Naive thymus-derived CD4-positive, alpha-beta T cell (primary cell): ENCODE measurements at regions of chr4 and their contacts with region 1.

Region 1: GRCh38 chr4:1289207-1290164 is at the start of gene MAEA:
- DNase-seq: peak; percentile 91 to 97 (median 96)
- ATAC-seq: peak; percentile 98
- H3K4me3 ChIP-seq: peak within 1 kb of the TSS; percentile 96
- H3K4me3 Mint-ChIP-seq: peak within 1 kb of the TSS; percentile 91 to 99 (median 93)
- H3K27ac ChIP-seq: peak within 1 kb of the TSS; percentile 93
- H3K27ac Mint-ChIP-seq: peak within 1 kb of the TSS; percentile 88 to 94 (median 90)
- H3K4me1 ChIP-seq: peaks cover 22 to 34% of the 10 kb centered on the region in 2 donors
- H3K4me1 Mint-ChIP-seq: peaks cover 23 to 49% (median 37%) of the 10 kb centered on the region in 7 donors
- H3K27me3 ChIP-seq: no peaks in the 10 kb centered on the region
- H3K27me3 Mint-ChIP-seq: no peaks in the 10 kb centered on the region
- total RNA-seq, gene MAEA: 56.2 to 92.2 (median 79.4) TPM

Region 2: DNA sequence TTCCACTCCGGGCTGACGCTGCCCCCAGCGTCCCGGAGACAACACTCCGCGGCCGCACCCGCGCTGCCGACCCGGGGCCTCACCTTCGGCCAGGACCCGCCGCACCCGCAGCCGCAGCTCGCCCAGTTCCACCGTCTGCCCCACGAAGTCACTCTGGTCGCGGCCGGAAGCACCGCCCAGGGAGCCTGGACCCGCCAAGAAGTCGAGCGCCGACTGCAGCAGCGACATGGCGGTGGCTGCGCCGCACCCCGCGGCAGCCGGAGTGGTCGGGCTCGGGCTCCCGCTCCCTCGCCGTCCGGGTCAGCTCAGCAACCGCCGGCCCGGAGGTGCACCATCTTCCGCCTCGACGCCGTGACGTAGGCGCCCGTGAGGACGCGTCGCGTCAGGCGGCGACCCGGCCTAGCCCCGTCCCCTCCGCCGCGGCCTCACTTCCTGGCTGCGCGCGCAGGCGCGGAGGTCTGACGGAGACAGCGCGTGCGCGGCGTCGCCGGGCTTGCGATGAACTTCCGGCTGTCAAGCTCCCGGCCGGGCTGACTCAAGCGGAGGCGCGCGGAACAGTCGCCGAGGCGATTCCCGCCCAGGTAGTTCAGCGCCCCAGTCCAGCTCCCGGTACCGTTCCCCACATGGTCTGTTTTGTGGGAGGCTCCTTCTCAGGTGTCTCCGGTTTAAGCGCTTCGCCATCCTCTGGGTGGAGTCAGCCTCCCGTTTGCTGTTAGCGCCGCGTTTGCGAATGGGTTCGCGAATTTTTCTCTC is 357.4 kb before region 1 on chr4 and contains the starts of genes GAK and TMEM175:
- CTCF ChIA-PET with region 1: no interaction called
- POLR2A ChIA-PET with region 1: interaction called, 4 read pairs
- intact Hi-C with region 1: loop called (anchors 1 to 5 kb)
- DNase-seq: peak; percentile 93 to 99 (median 98)
- ATAC-seq: peak; percentile 95
- H3K4me3 ChIP-seq: peak within 1 kb of the TSS; percentile 83
- H3K4me3 Mint-ChIP-seq: peak within 1 kb of the TSS; percentile 89 to 99 (median 95)
- H3K27ac ChIP-seq: peak within 1 kb of the TSS; percentile 99
- H3K27ac Mint-ChIP-seq: peak within 1 kb of the TSS; percentile 92 to 97 (median 96)
- H3K4me1 ChIP-seq: peaks cover 24 to 35% of the 10 kb centered on the region in 2 donors
- H3K4me1 Mint-ChIP-seq: peaks cover 35 to 59% (median 48%) of the 10 kb centered on the region in 7 donors
- H3K27me3 ChIP-seq: no peaks in the 10 kb centered on the region
- H3K27me3 Mint-ChIP-seq: no peaks in the 10 kb centered on the region
- total RNA-seq, gene GAK: 167 to 206 (median 174) TPM
- total RNA-seq, gene TMEM175: 28.9 to 69.9 (median 64.9) TPM

Region 3: DNA sequence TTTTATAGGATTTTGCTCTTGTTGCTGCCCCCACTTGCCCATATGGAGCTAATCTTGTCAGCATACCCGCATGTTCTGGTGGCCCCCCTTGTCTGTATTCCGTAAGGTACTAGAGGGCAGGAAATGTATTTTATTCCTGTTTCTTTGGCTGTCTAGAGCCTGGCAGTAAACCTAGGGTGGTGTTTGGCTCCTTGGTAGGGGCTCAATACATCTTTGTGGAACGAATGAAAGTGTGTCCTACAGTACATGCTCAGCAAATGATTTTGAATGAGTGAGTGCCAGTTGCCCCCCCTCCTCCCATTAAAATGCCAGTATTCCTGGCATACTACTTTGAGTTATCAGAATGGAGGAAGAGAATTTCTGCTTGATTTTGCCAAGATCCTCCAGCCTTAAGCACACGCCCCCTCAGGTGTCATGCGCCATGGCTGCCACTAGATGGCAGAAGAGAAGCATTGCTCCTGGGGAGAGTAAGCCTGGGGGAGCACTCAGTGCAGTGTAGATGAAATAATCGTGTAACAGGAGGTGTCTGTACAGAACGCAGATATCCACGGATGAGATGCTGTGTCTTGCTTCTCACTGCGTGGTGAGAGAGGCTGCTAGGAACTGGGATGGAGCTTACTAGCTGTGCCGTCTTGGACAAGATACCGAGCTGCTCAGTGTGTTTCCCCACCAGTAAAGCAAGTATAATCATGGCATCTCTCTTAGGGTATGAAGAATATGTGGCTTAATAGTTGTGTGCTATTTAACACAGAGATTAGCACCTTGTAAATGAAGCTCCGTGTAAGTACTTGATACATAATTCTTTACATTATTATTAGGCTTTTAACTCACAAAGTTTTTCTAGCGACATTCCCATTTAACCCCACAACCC is 158.9 kb before region 1 on chr4:
- CTCF ChIA-PET with region 1: no interaction called
- POLR2A ChIA-PET with region 1: no interaction called
- intact Hi-C with region 1: loop called in 1 of 2 experiments (anchors 1 kb)
- DNase-seq: peak; percentile 55 to 86 (median 75)
- ATAC-seq: peak; percentile 100
- H3K4me3 ChIP-seq: no peak overlapping the region
- H3K4me3 Mint-ChIP-seq: peak overlapping the region in 1 of 10 donors; percentile 46
- H3K27ac ChIP-seq: no peak overlapping the region
- H3K27ac Mint-ChIP-seq: no peak overlapping the region
- H3K4me1 ChIP-seq: no peaks in the 10 kb centered on the region
- H3K4me1 Mint-ChIP-seq: peaks cover 0 to 9% (median 4%) of the 10 kb centered on the region in 7 donors
- H3K27me3 ChIP-seq: no peaks in the 10 kb centered on the region
- H3K27me3 Mint-ChIP-seq: peaks cover 0 to 24% (median 6%) of the 10 kb centered on the region in 5 donors

Region 4: DNA sequence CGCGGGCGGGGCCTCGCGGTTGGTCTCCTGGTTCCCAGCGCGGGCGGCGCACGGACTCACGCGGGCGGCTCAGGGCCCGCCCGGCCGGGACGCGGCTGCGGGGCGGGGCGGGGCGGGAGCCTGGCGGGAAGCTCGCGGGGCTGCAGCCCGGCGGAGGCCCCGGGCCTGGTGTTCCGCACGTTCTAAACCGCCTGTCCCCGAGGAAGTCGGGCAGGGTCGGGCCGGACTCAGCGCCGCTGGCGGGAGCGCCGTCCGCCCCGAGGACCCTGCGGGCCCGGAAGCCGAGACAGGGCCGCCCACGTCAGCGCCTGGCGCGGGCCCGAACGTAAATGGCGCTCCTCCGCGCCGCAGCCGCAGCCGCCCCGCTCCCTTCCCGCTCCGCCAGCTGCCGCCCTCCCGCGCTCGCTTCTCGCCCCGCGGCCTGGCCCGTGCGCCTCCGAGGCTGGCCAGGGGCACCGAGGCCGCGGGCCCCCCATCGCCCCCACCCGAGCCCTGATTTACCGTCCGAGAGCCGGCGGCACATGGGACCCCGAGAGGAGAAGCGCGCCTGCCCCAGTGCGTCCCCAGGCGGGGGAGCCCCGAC is 40.2 kb before region 1 on chr4:
- CTCF ChIA-PET with region 1: interaction called, 4 read pairs
- POLR2A ChIA-PET with region 1: interaction called, 18 read pairs
- intact Hi-C with region 1: loop called (anchors 1 kb)
- DNase-seq: peak; percentile 79 to 92 (median 90)
- ATAC-seq: peak; percentile 80
- H3K4me3 ChIP-seq: peak overlapping the region; percentile 82
- H3K4me3 Mint-ChIP-seq: peak overlapping the region; percentile 80 to 93 (median 88)
- H3K27ac ChIP-seq: peak overlapping the region; percentile 97
- H3K27ac Mint-ChIP-seq: peak overlapping the region; percentile 90 to 96 (median 94)
- H3K4me1 ChIP-seq: peaks cover 51 to 66% of the 10 kb centered on the region in 2 donors
- H3K4me1 Mint-ChIP-seq: peaks cover 50 to 74% (median 65%) of the 10 kb centered on the region in 7 donors
- H3K27me3 ChIP-seq: no peaks in the 10 kb centered on the region
- H3K27me3 Mint-ChIP-seq: no peaks in the 10 kb centered on the region

Region 5: DNA sequence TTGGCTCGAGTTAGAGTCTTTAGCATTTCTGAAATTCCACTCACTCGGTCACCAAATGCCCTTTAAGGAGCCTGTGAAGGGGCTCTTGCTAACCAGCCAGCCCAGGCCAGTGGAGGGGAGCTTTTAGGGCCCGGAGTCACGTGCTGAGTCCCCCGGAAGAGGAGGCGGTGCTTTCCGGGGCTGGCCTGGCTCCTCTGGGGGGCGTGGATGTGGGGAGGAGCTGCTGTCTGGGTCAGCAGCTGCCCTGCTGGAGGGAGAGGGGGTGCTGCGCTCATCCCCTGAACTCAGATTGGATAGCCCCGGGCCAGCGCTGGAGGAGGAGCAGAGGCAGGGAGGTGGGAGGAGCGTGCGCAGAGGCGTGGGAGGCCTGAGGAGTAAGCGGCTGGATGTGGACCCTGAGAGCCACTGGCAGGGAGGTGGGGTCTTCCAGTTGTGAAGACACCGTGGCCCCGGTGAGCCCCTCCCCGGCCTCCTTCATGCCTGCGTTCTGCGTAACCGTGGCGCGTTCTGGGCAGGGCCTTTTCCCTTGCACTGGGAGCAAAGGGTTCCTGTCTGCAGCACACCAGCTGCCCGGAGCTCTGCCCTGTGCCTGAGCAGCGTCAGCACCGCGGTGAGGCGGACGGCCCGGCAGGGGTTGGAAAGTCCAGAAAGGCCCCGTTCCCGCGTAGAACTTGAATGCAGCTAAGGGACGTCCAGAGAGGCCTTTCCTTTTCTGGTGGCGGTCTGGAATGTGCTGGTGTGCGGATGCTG is 19.9 kb after region 1 on chr4:
- CTCF ChIA-PET with region 1: no interaction called
- POLR2A ChIA-PET with region 1: interaction called, 4 read pairs
- intact Hi-C with region 1: loop called (anchors 1 kb)
- DNase-seq: peak in 5 of 9 donors; percentile 17 to 58 (median 47)
- ATAC-seq: peak; percentile 74
- H3K4me3 ChIP-seq: peak overlapping the region; percentile 50
- H3K4me3 Mint-ChIP-seq: peak overlapping the region; percentile 74 to 89 (median 84)
- H3K27ac ChIP-seq: peak overlapping the region; percentile 53
- H3K27ac Mint-ChIP-seq: peak overlapping the region; percentile 66 to 89 (median 85)
- H3K4me1 ChIP-seq: peaks cover 21 to 38% of the 10 kb centered on the region in 2 donors
- H3K4me1 Mint-ChIP-seq: peaks cover 42 to 79% (median 63%) of the 10 kb centered on the region in 7 donors
- H3K27me3 ChIP-seq: no peaks in the 10 kb centered on the region
- H3K27me3 Mint-ChIP-seq: no peaks in the 10 kb centered on the region

Region 6: GRCh38 chr4:1579901-1580691 is 290.6 kb after region 1 on chr4:
- CTCF ChIA-PET with region 1: no interaction called
- POLR2A ChIA-PET with region 1: no interaction called
- intact Hi-C with region 1: loop called in 1 of 2 experiments (anchors 1 kb)
- DNase-seq: peak; percentile 85 to 97 (median 93)
- ATAC-seq: peak; percentile 90
- H3K4me3 ChIP-seq: peak overlapping the region; percentile 70
- H3K4me3 Mint-ChIP-seq: peak overlapping the region; percentile 73 to 87 (median 80)
- H3K27ac ChIP-seq: peak overlapping the region; percentile 73
- H3K27ac Mint-ChIP-seq: peak overlapping the region; percentile 18 to 79 (median 55)
- H3K4me1 ChIP-seq: peaks cover 0 to 5% of the 10 kb centered on the region in 2 donors
- H3K4me1 Mint-ChIP-seq: peaks cover 0 to 14% (median 10%) of the 10 kb centered on the region in 7 donors
- H3K27me3 ChIP-seq: no peaks in the 10 kb centered on the region
- H3K27me3 Mint-ChIP-seq: no peaks in the 10 kb centered on the region